ENCODE measurements at regions of chr20 and their contacts with region 1.

Region 1: DNA sequence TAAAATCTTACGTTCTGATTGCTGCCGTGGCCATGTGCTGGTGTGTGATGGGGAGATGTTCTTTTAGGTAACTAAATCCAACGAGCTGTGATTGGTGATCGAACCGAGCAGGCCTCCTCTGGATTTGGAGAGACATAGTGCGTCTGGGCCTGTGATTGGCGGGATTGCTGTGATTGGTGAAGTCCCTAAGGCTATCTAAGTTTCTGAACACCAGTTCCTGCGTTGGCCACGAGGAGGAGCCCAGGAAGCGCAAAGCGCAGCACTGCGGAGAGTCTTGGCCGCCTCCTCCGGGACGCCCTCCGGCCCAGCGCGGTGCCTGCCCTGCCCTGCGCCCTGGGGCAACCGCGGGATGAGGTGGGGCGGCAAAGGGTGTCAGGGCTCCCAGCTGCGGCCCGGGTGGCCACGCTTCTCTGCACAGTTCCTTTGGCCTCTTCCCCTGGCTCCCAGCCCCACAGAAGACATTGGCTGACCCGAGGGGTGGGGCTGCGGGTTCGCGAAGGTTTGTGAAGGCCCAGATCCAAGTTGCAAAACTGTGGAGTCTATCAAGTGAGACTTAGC is 33.0 kb downstream of the HNF4A start:
- DNase-seq: peak; percentile 22 to 62
- ATAC-seq: peak; percentile 54 to 73
- H3K4me3 ChIP-seq: no peak overlapping the region
- H3K27ac ChIP-seq: no peak overlapping the region
- H3K4me1 ChIP-seq: no peaks in the 10 kb centered on the region
- H3K27me3 ChIP-seq: peaks cover 2 to 19% (median 12%) of the 10 kb centered on the region in 3 donors
- CTCF ChIP-seq: peak; percentile 58 to 74 (median 63)
- POLR2A ChIP-seq: no peak

Region 2: GRCh38 chr20:43388268-43389002 is 1000.1 kb before region 1 on chr20:
- in situ Hi-C with region 1: no loop called
- intact Hi-C with region 1: no loop called
- DNase-seq: no peak
- ATAC-seq: no peak
- H3K4me3 ChIP-seq: no peak overlapping the region
- H3K27ac ChIP-seq: no peak overlapping the region
- H3K4me1 ChIP-seq: no peaks in the 10 kb centered on the region
- H3K27me3 ChIP-seq: no peaks in the 10 kb centered on the region
- CTCF ChIP-seq: no peak
- POLR2A ChIP-seq: no peak

Region 3: DNA sequence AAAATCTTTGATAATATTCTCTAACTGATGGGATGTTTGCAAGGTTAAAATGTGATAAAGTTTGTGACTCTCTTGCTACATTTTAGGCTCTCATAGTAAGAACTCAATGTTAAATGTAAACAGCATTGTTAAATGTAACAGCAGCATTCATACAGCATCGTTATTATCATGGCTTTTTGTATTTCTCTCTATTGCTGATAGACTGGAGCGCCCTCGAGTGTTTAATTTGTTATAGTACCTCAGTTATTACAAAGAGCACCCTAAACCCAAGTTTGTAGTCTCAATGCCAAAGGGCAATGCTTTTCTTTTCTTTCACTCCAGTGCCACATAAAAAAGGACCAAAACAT is 72.2 kb after region 1 on chr20:
- in situ Hi-C with region 1: loop called in 3 of 4 experiments (anchors 5 to 10 kb)
- intact Hi-C with region 1: loop called (anchors 5 kb)
- DNase-seq: no peak
- ATAC-seq: peak in 1 of 2 donors; percentile 50
- H3K4me3 ChIP-seq: no peak overlapping the region
- H3K27ac ChIP-seq: no peak overlapping the region
- H3K4me1 ChIP-seq: no peaks in the 10 kb centered on the region
- H3K27me3 ChIP-seq: no peaks in the 10 kb centered on the region
- CTCF ChIP-seq: peak in 3 of 5 experiments; percentile 15 to 31 (median 19)
- POLR2A ChIP-seq: no peak

Region 4: GRCh38 chr20:44532259-44532980 is 143.9 kb after region 1 on chr20:
- in situ Hi-C with region 1: loop called (anchors 25 kb)
- intact Hi-C with region 1: loop called (anchors 10 kb)
- DNase-seq: no peak
- ATAC-seq: peak; percentile 28 to 38
- H3K4me3 ChIP-seq: peak overlapping the region; percentile 63 to 82 (median 78)
- H3K27ac ChIP-seq: peak overlapping the region; percentile 74 to 85 (median 77)
- H3K4me1 ChIP-seq: peaks cover 9 to 15% of the 10 kb centered on the region in 2 donors
- H3K27me3 ChIP-seq: no peaks in the 10 kb centered on the region
- CTCF ChIP-seq: no peak
- POLR2A ChIP-seq: no peak

Region 5: DNA sequence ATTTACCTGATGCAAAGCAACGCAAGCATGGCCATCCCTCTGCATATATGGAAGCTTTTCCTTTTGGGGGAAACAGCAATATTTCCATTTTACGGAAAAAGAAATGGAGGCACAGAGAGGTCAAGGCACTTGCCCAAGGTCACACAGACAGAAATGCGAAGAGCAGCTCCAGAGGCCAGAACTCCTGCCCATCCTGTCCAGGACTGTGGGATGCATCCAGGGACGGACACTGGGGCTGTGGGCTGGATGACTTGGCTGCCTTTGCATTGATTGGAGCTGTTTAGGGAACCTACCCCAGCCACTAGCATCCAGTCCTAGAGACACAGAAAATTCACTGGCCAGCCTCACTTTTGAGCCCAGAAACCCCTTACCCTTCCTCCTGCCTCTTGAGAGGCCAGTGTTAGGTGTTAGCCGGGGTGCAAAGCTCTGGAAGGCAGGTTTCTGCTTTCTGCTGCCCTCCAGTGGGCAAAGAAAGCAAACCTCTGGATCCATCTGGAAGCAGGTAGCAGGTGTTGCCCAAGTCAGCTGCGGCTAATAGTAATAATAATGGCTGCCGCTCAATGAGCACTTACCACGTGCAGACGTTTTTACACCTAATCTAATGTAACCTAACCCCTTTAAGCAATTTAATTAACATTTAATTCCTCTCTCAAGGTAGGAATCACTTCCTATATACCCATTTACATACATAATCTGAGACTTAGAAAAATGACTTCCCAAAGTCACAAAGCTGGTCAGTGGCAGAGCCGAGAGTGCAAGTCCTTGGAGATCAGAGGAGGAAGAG is 294.9 kb after region 1 on chr20:
- in situ Hi-C with region 1: loop called in 1 of 4 experiments (anchors 10 kb)
- intact Hi-C with region 1: loop called (anchors 5 kb)
- DNase-seq: no peak
- ATAC-seq: peak; percentile 51 to 53
- H3K4me3 ChIP-seq: no peak overlapping the region
- H3K27ac ChIP-seq: no peak overlapping the region
- H3K4me1 ChIP-seq: peaks cover 4 to 8% of the 10 kb centered on the region in 2 donors
- H3K27me3 ChIP-seq: no peaks in the 10 kb centered on the region
- CTCF ChIP-seq: peak in 4 of 5 experiments; percentile 20 to 68 (median 50)
- POLR2A ChIP-seq: no peak

Region 6: GRCh38 chr20:44738813-44739477 is 350.4 kb after region 1 on chr20:
- in situ Hi-C with region 1: loop called in 1 of 4 experiments (anchors 10 kb)
- intact Hi-C with region 1: loop called (anchors 5 kb)
- DNase-seq: peak in 1 of 2 donors; percentile 69
- ATAC-seq: peak; percentile 44 to 60
- H3K4me3 ChIP-seq: no peak overlapping the region
- H3K27ac ChIP-seq: peak overlapping the region; percentile 70 to 79 (median 76)
- H3K4me1 ChIP-seq: peaks cover 15% of the 10 kb centered on the region in 2 donors
- H3K27me3 ChIP-seq: no peaks in the 10 kb centered on the region
- CTCF ChIP-seq: no peak
- POLR2A ChIP-seq: no peak

Measured in gastrocnemius medialis (tissue), 4 donors.